Activated T-helper 2 cell treated with anti-CD3 and anti-CD28 coated beads, Interferon-gamma antibody, Interleukin-2, Interleukin-4, amounts not matched to agents 10 μg/mL and 5 μg/mL and 100 μg/mL, durations not matched to agents 14 hours and 24 hours and 36 hours (primary cell): ENCODE measurements at regions of chr3 and their contacts with region 1.

Region 1: GRCh38 chr3:108806316-108806715 is 16.3 kb upstream of the TRAT1 start:
- DNase-seq: peak; percentile 58
- H3K4me3 Mint-ChIP-seq: no peak overlapping the region
- H3K27ac Mint-ChIP-seq: peak overlapping the region; percentile 68
- H3K4me1 Mint-ChIP-seq: peaks cover 22% of the 10 kb centered on the region
- H3K27me3 Mint-ChIP-seq: no peaks in the 10 kb centered on the region

Region 2: DNA sequence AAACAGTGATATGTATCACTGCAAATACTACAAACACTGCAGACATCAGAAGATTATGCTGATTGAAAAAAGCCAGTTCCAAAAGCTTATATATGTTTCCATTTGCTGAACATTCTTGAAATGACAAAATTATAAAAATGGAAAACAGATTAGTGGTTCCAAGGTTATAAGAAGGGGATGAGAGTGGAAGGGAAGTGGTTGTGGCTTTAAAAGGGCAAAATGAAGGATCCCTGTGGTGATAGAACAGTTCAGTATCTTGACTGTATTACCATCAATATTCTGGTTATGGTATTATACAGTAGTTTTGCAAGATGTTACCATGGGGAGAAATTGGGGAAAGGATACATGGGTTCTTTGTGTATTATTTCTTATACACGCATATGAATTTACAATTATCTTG is 139.0 kb before region 1 on chr3:
- intact Hi-C with region 1: loop called (anchors 1 kb)
- DNase-seq: no peak
- H3K4me3 Mint-ChIP-seq: no peak overlapping the region
- H3K27ac Mint-ChIP-seq: peak overlapping the region; percentile 42
- H3K4me1 Mint-ChIP-seq: peaks cover 33% of the 10 kb centered on the region
- H3K27me3 Mint-ChIP-seq: no peaks in the 10 kb centered on the region

Region 3: DNA sequence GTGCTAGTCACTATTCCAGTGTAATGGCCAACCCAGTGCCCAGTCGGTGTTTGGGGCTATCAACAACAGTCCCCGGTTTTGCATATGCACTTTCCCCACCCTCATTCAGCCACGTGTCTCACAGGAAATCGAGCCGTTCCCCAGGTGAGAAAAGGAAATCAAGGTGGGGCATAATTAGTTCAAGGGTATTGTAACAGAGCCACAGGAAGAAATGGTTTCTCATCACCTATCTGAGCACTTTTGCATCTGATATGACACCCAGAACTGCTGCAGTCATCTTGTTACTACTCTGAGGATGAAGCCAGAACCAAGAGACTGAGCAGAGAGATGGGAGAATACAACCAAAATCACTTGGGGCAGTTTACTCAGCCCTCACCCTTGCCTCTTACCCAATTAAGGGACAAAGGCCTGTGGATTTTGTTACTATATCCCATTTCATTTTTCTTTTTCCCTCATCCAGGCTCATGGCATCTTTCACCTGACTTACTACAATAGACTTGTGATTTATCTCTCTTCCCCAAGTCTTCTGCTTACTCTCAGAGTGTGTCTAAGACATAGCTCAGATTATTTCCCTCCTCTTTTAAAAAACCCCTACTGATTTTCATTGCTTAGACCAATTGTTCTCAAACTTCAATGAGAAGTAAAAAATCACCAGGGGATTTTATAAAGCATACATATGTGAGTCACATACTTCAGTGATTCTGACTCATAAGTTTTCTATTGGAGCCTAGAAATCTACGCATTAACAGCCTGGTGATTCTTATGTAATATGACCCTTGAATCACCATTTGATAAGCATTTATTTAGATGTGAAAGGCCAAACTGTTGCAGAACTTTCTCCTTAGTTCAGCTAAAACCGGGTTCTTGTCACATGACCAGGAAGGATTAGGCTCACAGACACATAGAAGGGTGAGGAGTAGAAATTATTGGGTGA is 56.8 kb after region 1 on chr3:
- intact Hi-C with region 1: loop called (anchors 1 kb)
- DNase-seq: no peak
- H3K4me3 Mint-ChIP-seq: no peak overlapping the region
- H3K27ac Mint-ChIP-seq: peak overlapping the region; percentile 98
- H3K4me1 Mint-ChIP-seq: peaks cover 25% of the 10 kb centered on the region
- H3K27me3 Mint-ChIP-seq: no peaks in the 10 kb centered on the region